Right ventricle myocardium inferior (tissue), 1 donor: ENCODE measurements at regions of chrX and their contacts with region 1.

Region 1: DNA sequence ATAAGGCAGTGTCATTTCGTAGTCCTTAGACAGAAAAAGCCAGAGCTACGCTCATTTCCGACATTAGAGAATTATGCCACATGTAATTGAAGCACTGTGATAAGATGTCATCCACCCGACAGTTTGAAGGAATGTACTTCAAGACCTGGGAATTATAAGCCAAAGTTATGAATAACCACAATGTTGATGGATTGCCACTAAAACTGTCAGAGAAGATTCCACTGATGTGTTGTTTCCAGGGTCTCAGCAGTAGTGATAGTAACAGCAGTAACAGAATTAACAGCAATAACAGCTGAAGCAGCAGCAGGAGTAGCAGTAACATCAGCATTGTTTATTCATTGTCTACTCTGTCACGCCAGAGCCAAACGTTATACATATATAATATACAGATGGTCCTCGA is 24.7 kb downstream of the RAB33A start:
- DNase-seq: no peak
- ATAC-seq: no peak

Region 2: DNA sequence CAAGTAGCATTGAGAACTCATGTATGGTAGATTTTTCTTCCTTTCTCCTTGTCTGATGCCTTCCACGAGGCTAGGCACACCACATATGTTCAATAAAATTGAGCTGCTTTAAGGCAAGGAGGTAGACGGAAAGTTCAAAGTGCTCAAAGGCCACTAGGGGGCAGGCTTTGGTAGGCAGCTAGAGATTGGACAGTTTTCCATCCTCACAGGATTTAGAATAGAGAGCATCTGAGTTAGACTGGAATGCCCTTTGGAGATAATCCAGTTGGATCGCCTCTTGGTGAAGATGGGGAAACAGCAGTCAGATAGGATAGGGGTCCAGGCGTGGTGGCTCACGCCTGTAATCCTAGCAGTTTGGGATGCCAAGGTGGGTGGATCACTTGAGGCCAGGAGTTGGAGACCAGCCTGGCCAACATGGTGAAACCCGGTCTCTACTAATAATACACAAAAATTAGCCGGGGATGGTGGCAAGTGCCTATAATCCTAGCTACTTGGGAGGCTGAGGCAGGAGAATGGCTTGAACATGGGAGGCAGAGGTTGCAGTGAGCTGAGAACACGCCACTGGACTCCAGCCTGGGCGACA is 116.6 kb before region 1 on chrX:
- intact Hi-C with region 1: loop called (anchors 1 kb)
- DNase-seq: no peak
- ATAC-seq: peak; percentile 67